ENCODE measurements at regions of chrX and their contacts with region 1.

Region 1: DNA sequence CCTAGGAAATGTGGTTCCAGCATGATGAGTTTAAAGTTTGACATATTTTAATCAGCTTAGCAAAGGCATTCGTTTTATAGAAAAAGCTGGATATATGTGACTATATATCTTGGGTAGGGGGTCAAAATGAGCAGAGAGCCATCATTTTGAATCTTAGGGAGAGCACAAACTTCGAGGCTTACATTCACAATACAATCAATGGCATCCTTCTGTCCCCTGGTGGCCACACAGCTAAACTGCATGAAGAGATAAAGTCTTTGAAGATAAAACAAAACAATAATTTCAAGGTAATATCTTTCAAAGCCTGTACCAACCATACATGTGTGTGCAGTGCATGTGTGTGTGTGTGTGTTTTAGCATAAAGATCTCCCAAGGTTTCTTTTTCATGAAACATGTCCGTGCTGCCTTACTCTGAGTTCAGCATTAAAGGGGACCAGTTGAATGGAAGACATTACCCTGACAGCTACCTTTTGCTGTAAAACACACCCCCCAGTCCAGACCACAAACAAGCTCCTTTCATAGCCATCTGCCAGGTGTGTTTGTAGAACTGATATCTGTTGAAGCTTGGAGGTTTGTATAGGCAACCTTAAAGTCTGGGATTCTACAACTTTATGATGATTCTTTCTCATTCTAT is 22.0 kb downstream of the DYNLT3 start:
- DNase-seq: peak; percentile 49 to 60 (median 58)
- H3K4me3 ChIP-seq: no peak overlapping the region
- H3K4me3 Mint-ChIP-seq: peak overlapping the region in 2 of 8 donors; percentile 9 to 17
- H3K27ac ChIP-seq: no peak overlapping the region
- H3K27ac Mint-ChIP-seq: peak overlapping the region in 1 of 7 donors; percentile 28
- H3K4me1 ChIP-seq: peaks cover 23% of the 10 kb centered on the region
- H3K4me1 Mint-ChIP-seq: peaks cover 23 to 39% (median 28%) of the 10 kb centered on the region in 4 donors
- H3K27me3 ChIP-seq: no peaks in the 10 kb centered on the region
- H3K27me3 Mint-ChIP-seq: no peaks in the 10 kb centered on the region

Region 2: GRCh38 chrX:37371578-37371991 is 453.7 kb before region 1 on chrX:
- CTCF ChIA-PET with region 1: no interaction called
- POLR2A ChIA-PET with region 1: no interaction called
- intact Hi-C with region 1: no loop called
- DNase-seq: no peak
- H3K4me3 ChIP-seq: no peak overlapping the region
- H3K4me3 Mint-ChIP-seq: no peak overlapping the region
- H3K27ac ChIP-seq: no peak overlapping the region
- H3K27ac Mint-ChIP-seq: no peak overlapping the region
- H3K4me1 ChIP-seq: no peaks in the 10 kb centered on the region
- H3K4me1 Mint-ChIP-seq: no peaks in the 10 kb centered on the region
- H3K27me3 ChIP-seq: no peaks in the 10 kb centered on the region
- H3K27me3 Mint-ChIP-seq: no peaks in the 10 kb centered on the region

Region 3: GRCh38 chrX:37437160-37437559 is 388.2 kb before region 1 on chrX:
- CTCF ChIA-PET with region 1: no interaction called
- POLR2A ChIA-PET with region 1: no interaction called
- intact Hi-C with region 1: no loop called
- DNase-seq: no peak
- H3K4me3 ChIP-seq: no peak overlapping the region
- H3K4me3 Mint-ChIP-seq: no peak overlapping the region
- H3K27ac ChIP-seq: no peak overlapping the region
- H3K27ac Mint-ChIP-seq: no peak overlapping the region
- H3K4me1 ChIP-seq: no peaks in the 10 kb centered on the region
- H3K4me1 Mint-ChIP-seq: no peaks in the 10 kb centered on the region
- H3K27me3 ChIP-seq: no peaks in the 10 kb centered on the region
- H3K27me3 Mint-ChIP-seq: no peaks in the 10 kb centered on the region

Region 4: GRCh38 chrX:37745354-37745753 is 80.0 kb before region 1 on chrX:
- CTCF ChIA-PET with region 1: interaction called, 296 read pairs
- POLR2A ChIA-PET with region 1: interaction called, 27 read pairs
- intact Hi-C with region 1: loop called (anchors 1 kb)
- DNase-seq: peak; percentile 67 to 73 (median 71)
- H3K4me3 ChIP-seq: no peak overlapping the region
- H3K4me3 Mint-ChIP-seq: no peak overlapping the region
- H3K27ac ChIP-seq: no peak overlapping the region
- H3K27ac Mint-ChIP-seq: peak overlapping the region in 3 of 7 donors; percentile 4 to 61 (median 29)
- H3K4me1 ChIP-seq: peaks cover 11% of the 10 kb centered on the region
- H3K4me1 Mint-ChIP-seq: peaks cover 7 to 13% (median 11%) of the 10 kb centered on the region in 4 donors
- H3K27me3 ChIP-seq: no peaks in the 10 kb centered on the region
- H3K27me3 Mint-ChIP-seq: no peaks in the 10 kb centered on the region

Region 5: DNA sequence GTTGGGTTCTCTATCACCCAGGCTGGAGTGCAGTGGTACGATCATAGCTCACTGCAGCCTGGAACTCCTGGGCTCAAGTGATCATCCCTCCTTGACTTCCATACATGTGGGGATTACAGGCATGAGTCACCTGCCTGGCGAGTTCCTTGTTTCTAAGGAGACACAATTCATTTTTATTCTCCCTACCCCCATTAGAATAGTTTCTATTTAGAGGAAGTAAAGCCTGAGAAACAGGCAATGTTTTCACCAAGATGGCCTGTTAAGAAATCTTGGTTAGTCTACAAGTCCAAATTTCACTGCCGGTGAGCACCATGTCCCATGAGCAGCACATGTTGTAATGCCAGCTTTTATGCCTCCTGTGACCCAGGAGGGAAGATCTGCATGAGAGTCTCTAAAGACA is 39.8 kb before region 1 on chrX:
- CTCF ChIA-PET with region 1: interaction called, 12 read pairs
- POLR2A ChIA-PET with region 1: interaction called, 3 read pairs
- intact Hi-C with region 1: no loop called
- DNase-seq: no peak
- H3K4me3 ChIP-seq: no peak overlapping the region
- H3K4me3 Mint-ChIP-seq: no peak overlapping the region
- H3K27ac ChIP-seq: no peak overlapping the region
- H3K27ac Mint-ChIP-seq: peak overlapping the region in 2 of 7 donors; percentile 11 to 32
- H3K4me1 ChIP-seq: peaks cover 30% of the 10 kb centered on the region
- H3K4me1 Mint-ChIP-seq: peaks cover 20 to 35% (median 26%) of the 10 kb centered on the region in 4 donors
- H3K27me3 ChIP-seq: no peaks in the 10 kb centered on the region
- H3K27me3 Mint-ChIP-seq: no peaks in the 10 kb centered on the region

Region 6: DNA sequence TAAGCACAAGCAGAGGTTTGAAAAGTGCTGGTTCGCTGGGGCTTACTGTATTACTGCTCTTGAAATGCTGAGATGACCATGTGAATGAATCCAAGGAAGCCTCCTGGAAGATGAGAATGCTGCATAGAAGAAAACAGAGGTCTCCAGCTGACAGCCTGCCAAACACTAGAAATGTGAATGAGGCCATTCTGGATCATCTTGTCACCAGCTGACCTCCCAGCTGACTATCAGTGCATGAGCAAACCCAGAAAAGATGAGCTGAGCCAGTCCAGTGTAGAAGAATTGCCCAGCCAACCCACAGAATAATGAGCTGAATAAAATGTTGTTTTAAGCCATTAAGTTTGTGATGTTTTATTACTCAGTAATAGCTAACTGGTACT is 71.2 kb after region 1 on chrX:
- CTCF ChIA-PET with region 1: no interaction called
- POLR2A ChIA-PET with region 1: no interaction called
- intact Hi-C with region 1: no loop called
- DNase-seq: no peak
- H3K4me3 ChIP-seq: no peak overlapping the region
- H3K4me3 Mint-ChIP-seq: no peak overlapping the region
- H3K27ac ChIP-seq: no peak overlapping the region
- H3K27ac Mint-ChIP-seq: no peak overlapping the region
- H3K4me1 ChIP-seq: no peaks in the 10 kb centered on the region
- H3K4me1 Mint-ChIP-seq: no peaks in the 10 kb centered on the region
- H3K27me3 ChIP-seq: no peaks in the 10 kb centered on the region
- H3K27me3 Mint-ChIP-seq: peaks cover 2 to 5% of the 10 kb centered on the region in 2 donors

Region 7: GRCh38 chrX:38166478-38167083 is 341.3 kb after region 1 on chrX:
- CTCF ChIA-PET with region 1: no interaction called
- POLR2A ChIA-PET with region 1: no interaction called
- intact Hi-C with region 1: loop called (anchors 5 kb)
- DNase-seq: peak in 4 of 5 donors; percentile 16 to 24 (median 18)
- H3K4me3 ChIP-seq: no peak overlapping the region
- H3K4me3 Mint-ChIP-seq: no peak overlapping the region
- H3K27ac ChIP-seq: no peak overlapping the region
- H3K27ac Mint-ChIP-seq: no peak overlapping the region
- H3K4me1 ChIP-seq: no peaks in the 10 kb centered on the region
- H3K4me1 Mint-ChIP-seq: no peaks in the 10 kb centered on the region
- H3K27me3 ChIP-seq: no peaks in the 10 kb centered on the region
- H3K27me3 Mint-ChIP-seq: no peaks in the 10 kb centered on the region

Measured in CD4-positive, alpha-beta memory T cell (primary cell).